ENCODE measurements at regions of chr9 and their contacts with region 1.

Region 1: DNA sequence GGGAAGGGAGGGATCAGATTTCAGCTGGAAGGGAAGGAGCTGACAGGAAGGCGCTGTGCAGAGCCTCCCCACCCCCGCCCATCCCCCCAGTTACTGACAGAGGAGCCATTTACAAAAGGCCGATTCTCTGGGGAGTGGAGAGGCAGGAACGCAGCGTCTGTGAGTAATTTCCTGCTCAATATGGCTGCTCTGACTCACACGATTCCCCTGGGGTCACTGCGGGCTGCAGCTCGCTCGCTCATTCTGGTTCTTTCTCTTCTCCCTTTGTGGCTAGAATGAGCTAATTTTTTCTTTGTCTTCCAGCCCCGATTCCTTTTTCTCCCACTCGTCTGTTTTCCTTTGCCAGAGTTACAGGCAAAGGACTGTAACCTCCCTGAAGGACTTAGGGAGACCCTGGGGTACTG is 28.8 kb downstream of the PTPA start:
- DNase-seq: peak; percentile 91
- ATAC-seq: peak; percentile 90
- H3K4me3 Mint-ChIP-seq: peak overlapping the region; percentile 83
- H3K27ac Mint-ChIP-seq: peak overlapping the region; percentile 99
- H3K4me1 Mint-ChIP-seq: peaks cover 37% of the 10 kb centered on the region
- H3K27me3 Mint-ChIP-seq: no peaks in the 10 kb centered on the region

Region 2: DNA sequence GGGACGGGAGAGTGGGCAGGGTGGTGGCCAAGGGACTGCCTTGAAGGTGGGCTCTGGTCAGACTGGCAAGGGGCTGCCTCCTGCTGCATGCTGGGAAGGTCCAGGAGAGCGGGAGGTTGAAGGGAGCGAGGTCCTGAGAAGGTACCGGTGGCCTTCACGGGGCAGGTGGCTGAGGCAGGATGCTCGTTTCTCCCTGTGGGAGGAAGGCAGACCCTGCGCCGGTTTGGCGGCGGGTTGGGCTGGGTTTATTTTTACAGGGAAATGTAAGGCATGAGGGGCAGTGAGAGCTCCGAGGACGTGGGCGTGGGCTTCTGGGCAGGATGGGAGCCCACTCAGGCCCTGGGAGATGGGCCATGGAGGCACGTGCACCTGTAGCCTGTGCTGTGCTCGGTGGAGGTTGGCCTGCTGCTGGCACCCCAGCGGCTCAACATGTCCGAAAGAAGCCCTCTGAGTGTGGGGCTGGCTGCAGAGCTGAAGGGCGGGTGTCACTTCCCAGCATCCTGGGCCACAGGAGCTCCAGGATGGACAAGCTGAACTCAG is 10.7 kb after region 1 on chr9:
- CTCF ChIA-PET with region 1: interaction called, 10 read pairs
- POLR2A ChIA-PET with region 1: no interaction called
- intact Hi-C with region 1: no loop called
- DNase-seq: no peak
- ATAC-seq: no peak
- H3K4me3 Mint-ChIP-seq: no peak overlapping the region
- H3K27ac Mint-ChIP-seq: no peak overlapping the region
- H3K4me1 Mint-ChIP-seq: no peaks in the 10 kb centered on the region
- H3K27me3 Mint-ChIP-seq: no peaks in the 10 kb centered on the region

Region 3: DNA sequence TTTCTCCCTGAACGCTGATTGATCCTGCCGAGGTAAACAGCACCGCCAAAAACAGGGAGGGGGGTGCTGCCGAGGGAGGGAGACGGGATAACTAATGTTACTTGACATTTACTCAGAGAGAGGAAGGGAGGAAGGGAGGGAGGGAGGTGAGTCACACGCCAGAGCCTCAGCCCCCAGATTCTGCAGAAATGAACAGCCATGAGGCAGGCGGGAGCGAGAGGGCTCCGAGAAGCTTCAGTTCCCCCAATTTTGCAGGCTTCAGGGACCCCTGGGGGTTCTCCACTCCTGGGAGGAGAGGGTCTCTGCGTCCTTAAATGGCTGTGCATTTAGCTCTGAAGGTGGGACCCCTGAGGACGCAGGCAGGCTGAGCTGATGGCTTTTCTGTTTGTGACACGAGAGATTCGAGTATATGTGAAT is 97.2 kb after region 1 on chr9:
- CTCF ChIA-PET with region 1: interaction called, 5 read pairs
- POLR2A ChIA-PET with region 1: interaction called, 4 read pairs
- intact Hi-C with region 1: loop called in 1 of 2 experiments (anchors 1 kb)
- DNase-seq: peak; percentile 84
- ATAC-seq: peak; percentile 80
- H3K4me3 Mint-ChIP-seq: peak overlapping the region; percentile 71
- H3K27ac Mint-ChIP-seq: peak overlapping the region; percentile 94
- H3K4me1 Mint-ChIP-seq: peaks cover 51% of the 10 kb centered on the region
- H3K27me3 Mint-ChIP-seq: no peaks in the 10 kb centered on the region

Region 4: DNA sequence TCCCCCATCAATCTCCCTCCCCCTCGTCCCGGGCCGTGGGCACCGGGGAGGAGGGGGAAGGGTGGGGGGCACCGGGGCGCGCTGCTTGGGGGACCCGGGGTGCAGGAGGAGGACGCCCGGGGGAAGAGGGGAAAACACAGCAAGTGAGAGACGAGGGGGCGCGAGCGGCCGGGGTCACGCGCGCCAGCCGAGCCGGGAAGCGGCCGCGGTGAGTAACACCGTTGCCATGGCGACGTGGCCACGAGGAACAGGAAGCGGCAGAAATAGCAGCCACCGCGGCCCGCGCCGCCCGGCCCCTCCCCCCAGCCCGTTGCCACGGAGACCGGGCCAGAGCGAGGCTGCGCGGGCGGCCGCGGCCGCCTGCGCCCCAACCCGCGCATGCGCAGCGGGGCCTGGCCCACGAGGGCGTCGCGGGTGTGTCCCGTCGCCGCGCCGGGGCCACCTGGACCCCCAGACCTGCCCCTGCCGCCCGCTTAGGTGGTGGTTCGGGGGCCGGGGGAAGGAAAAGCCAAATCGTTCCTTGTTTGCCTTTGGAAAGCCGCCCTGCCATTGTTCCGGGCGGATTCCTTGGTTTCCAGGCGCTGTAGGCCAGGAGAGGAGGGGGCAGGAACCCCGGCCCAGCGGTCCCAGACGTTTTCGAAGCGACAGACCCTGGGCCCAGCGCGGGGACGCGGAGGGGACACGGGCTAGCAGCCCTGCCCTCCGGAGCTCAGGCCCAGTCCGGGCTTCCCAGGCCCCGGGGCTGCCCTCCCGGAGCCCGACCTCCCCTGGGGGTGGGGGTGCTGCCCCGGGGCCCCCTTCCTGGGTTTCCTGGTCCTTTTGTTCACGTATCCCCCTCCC is 273.8 kb after region 1 on chr9:
- CTCF ChIA-PET with region 1: no interaction called
- POLR2A ChIA-PET with region 1: no interaction called
- intact Hi-C with region 1: loop called in 1 of 2 experiments (anchors 1 kb)
- DNase-seq: peak; percentile 99
- ATAC-seq: peak; percentile 89
- H3K4me3 Mint-ChIP-seq: peak overlapping the region; percentile 75
- H3K27ac Mint-ChIP-seq: peak overlapping the region; percentile 94
- H3K4me1 Mint-ChIP-seq: peaks cover 23% of the 10 kb centered on the region
- H3K27me3 Mint-ChIP-seq: no peaks in the 10 kb centered on the region

Region 5: DNA sequence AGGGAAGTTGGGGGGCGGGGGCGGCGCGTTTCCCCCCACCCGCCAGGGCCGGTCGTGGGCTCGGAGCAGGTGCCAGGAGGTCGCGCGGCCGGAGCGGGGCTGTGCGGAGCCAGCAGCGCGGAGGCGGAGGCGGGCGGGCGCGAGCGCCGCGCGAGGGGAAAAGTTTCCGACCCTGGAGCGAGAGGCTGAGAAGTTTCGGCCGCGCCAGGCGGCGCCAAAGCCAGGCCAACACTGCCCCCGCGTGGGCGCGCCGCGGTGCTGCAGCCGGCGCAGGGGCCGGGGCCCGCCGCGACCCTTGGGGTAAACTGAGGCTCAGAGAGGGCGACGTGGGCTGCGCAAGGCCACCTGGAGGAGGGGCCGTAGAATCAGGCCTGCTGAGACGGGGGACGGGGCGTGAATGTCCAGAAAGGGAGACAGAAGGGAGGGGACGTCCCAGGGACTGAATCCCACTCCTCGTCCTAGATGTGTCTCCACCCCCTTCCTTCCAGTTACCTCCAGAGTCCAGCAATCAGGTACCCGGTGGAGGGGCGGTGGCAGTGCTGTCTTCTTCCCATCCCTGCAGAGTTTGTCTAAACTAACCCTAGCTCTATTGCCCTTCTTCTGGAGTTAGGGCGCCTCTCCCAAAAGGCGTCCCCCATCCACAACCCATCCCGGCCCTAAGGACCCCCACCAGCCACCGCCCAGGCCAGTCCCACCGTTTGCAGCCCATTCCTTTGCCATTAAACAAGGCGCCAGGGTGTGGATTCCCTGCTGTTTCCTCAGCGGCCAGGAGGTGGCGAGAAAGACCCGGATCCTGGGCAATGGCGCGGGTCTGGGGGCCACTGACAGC is 470.7 kb after region 1 on chr9:
- CTCF ChIA-PET with region 1: interaction called, 15 read pairs
- POLR2A ChIA-PET with region 1: no interaction called
- intact Hi-C with region 1: loop called (anchors 1 kb)
- DNase-seq: peak; percentile 85
- ATAC-seq: peak; percentile 63
- H3K4me3 Mint-ChIP-seq: peak overlapping the region; percentile 73
- H3K27ac Mint-ChIP-seq: peak overlapping the region; percentile 47
- H3K4me1 Mint-ChIP-seq: peaks cover 29% of the 10 kb centered on the region
- H3K27me3 Mint-ChIP-seq: no peaks in the 10 kb centered on the region

Region 6: DNA sequence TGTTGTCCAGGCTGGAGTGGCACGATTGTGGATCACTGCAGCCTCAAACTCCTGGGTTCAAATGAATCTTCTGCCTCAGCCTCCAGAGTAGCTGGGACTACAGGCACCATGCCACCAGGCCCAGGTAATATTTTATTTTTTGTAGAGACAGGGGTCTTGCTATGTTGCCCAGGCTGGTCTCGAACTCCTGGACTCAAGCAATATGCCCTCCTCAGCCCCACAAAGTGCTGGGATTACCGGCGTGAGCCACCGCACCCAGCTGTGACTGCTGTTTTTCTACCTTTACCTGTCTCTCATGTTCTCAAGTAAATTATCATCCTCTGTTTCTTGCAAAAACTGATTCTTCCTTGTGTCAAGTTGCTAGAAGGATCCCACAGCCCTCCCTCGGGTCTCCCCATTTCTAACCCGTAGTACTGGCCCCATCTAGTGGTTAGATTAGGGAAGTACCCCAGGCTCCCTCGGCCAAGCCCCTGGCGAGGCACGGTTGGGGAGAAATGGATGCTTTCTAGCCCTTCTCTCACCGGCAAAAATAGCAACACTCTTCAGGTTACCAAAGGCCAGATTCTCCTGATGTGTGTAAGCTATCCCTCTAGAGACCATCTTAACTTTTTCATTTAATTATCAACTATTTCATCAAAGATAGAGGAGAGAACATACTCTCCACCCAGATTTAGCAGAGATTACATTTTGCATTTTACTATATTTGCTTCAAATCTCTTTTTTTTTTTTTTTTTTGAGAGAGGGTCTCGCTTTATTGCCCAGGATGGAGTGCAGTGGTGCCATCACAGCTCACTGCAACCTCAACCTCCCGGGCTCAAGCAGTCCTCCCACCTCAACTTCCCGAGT is 643.7 kb after region 1 on chr9:
- CTCF ChIA-PET with region 1: interaction called, 3 read pairs
- POLR2A ChIA-PET with region 1: no interaction called
- intact Hi-C with region 1: loop called in 1 of 2 experiments (anchors 10 kb)
- DNase-seq: peak; percentile 84
- ATAC-seq: peak; percentile 100
- H3K4me3 Mint-ChIP-seq: no peak overlapping the region
- H3K27ac Mint-ChIP-seq: peak overlapping the region; percentile 11
- H3K4me1 Mint-ChIP-seq: peaks cover 4% of the 10 kb centered on the region
- H3K27me3 Mint-ChIP-seq: peaks cover 2% of the 10 kb centered on the region

Measured in activated CD4-positive, alpha-beta T cell treated with anti-CD3 and anti-CD28 coated beads for 36 hours (primary cell).